ENCODE measurements at regions of chr9 and their contacts with region 1.

Region 1: DNA sequence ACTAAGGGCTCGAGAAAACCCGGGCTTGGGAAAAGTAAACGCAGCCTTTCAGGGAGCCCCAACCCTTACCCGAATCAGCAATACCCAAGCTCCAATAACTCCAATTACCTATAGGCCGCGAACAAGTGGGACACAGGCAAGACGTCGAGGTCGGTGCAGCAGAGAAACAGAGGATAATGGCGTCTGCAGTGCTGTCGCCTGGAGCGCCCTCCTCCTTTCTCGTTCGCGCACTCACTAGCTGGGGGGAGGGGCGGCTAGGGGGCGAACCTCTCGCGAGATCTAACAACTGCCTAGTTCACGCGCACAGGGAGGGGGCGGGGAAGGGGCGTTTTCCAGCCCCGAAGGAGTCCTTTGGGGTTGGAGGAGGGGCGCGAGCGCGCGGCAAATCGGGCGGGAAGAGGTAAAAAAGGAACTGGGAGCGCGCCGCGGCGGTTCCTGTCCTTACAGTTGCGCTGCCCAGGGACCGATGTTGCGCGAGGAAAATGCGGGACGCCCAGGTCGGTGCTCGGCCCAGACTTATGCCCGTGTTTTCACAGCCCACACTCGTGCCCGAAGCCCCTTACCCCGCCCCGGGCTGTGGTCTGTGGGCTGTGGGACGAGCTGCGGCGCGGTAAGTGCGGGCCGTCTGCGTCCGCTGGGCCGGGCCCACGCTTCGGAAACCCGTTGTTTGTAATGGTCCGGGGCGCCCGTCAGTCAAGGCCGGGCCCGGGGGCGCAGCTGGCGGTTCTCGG is at the start of gene RMI1:
- DNase-seq: peak; percentile 99 to 100 (median 99)
- ATAC-seq: peak; percentile 77
- H3K4me3 ChIP-seq: peak within 1 kb of the TSS; percentile 98 to 100
- H3K4me3 Mint-ChIP-seq: peak within 1 kb of the TSS; percentile 100
- H3K27ac ChIP-seq: peak within 1 kb of the TSS; percentile 96 to 100
- H3K27ac Mint-ChIP-seq: peak within 1 kb of the TSS; percentile 98
- H3K4me1 ChIP-seq: peaks cover 31% of the 10 kb centered on the region
- H3K4me1 Mint-ChIP-seq: peaks cover 42% of the 10 kb centered on the region
- H3K27me3 ChIP-seq: no peaks in the 10 kb centered on the region
- H3K27me3 Mint-ChIP-seq: no peaks in the 10 kb centered on the region
- CTCF ChIP-seq: no peak
- total RNA-seq, gene RMI1: 0.35 to 1.1 TPM

Region 2: DNA sequence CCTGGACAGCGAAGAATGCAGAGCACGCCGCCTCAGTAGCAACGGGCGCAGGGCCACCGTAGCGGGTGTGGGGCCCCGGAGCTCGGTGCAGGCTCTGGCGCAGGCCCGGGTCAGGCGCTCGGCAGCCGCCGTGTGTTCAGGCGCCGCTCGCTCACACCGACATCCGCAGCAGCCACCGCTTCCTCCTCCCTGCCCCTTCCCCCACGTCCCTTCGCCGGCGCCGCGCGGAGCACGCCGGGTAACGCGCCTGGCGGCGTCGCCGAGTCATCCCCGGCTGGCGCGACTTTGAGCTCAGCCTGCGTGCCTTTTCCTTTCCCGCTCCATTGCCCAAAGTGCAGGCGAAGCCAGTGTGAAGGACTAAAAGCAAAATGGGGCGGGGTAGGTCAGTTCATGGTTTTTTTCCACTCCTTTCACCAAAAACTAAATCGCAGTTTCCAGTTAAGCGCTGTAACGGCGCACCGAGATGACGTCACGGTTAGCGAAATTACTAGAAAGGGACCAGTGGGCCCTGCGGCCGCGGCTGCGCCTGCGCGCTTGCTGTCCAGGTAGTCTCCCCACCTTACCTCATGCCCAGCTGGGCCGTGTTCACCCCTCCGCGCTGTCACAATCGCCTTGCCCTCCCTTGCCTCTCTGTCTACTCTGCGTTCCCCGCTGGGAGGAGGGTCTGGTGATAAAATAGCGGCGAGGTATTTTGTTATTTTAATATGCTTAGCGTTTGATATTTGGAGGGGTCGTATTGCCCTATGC is 272.6 kb before region 1 on chr9 and contains the start of gene UBQLN1:
- CTCF ChIA-PET with region 1: no interaction called
- POLR2A ChIA-PET with region 1: interaction called, 19 read pairs
- intact Hi-C with region 1: loop called (anchors 1 to 2 kb)
- DNase-seq: peak; percentile 83 to 97 (median 91)
- ATAC-seq: peak; percentile 80
- H3K4me3 ChIP-seq: peak within 1 kb of the TSS; percentile 89 to 97
- H3K4me3 Mint-ChIP-seq: peak within 1 kb of the TSS; percentile 85
- H3K27ac ChIP-seq: peak within 1 kb of the TSS; percentile 98 to 99
- H3K27ac Mint-ChIP-seq: peak within 1 kb of the TSS; percentile 100
- H3K4me1 ChIP-seq: peaks cover 40% of the 10 kb centered on the region
- H3K4me1 Mint-ChIP-seq: peaks cover 43% of the 10 kb centered on the region
- H3K27me3 ChIP-seq: no peaks in the 10 kb centered on the region
- H3K27me3 Mint-ChIP-seq: no peaks in the 10 kb centered on the region
- CTCF ChIP-seq: no peak
- total RNA-seq, gene UBQLN1: 163 to 169 TPM

Region 3: DNA sequence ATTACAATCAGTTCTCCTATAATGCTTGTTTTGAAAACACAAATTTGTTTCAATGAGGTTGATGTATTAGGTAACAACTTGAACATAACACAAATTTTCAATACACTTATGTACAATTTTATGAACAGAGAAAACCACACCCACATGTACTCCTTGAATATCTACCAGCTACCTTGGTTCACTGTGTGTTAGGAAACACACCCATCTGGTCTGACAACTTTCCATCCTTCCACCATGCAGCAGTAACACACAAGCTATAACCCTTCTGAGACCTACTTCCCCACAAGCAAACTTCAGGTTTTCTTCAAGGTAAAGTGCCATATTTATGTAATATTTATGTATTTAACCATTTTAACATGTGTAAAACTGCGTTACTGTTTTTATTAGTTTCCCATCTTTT is 236.3 kb before region 1 on chr9:
- CTCF ChIA-PET with region 1: no interaction called
- POLR2A ChIA-PET with region 1: no interaction called
- intact Hi-C with region 1: no loop called
- DNase-seq: no peak
- ATAC-seq: no peak
- H3K4me3 ChIP-seq: no peak overlapping the region
- H3K4me3 Mint-ChIP-seq: no peak overlapping the region
- H3K27ac ChIP-seq: no peak overlapping the region
- H3K27ac Mint-ChIP-seq: no peak overlapping the region
- H3K4me1 ChIP-seq: no peaks in the 10 kb centered on the region
- H3K4me1 Mint-ChIP-seq: no peaks in the 10 kb centered on the region
- H3K27me3 ChIP-seq: no peaks in the 10 kb centered on the region
- H3K27me3 Mint-ChIP-seq: no peaks in the 10 kb centered on the region
- CTCF ChIP-seq: no peak

Region 4: DNA sequence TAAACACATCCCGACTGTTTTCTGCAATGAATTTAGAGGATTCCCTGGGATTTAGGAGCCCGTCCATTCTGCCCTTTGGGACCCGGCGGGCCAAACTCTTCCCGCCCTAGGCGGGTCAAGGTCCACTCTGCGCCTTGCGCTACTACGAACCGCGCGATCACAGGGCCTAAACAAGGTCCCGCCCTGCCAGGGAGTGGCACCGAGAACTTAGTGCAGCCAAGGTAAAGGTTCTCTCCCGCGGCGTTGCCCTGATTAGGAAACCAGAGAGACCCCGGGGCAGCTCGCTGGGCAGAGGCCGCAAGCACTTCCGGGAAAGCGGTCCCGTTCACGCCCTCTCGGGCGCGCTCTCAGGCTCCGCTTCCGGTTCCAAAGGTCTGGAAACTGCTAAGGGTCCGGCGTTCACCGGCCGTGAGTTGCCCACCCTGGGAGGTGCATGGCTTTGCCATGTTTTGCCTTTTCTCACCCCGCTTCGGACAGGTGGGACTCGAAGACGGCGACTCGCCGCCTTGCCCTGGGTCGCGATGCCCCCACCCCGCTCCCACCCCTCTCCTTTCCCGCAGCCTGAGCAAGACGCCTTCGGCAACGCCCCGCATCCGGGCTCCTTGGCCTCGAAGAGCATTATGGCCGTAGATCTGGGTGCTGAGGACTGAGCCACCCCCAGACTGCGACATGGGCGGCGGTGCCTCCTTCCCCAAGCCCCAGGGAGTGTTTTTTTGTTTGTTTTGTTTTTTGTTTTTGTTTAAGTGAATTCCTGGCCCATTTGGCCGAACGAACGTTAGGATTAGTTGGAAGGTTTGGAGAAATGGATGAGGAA is 23.9 kb before region 1 on chr9:
- CTCF ChIA-PET with region 1: interaction called, 6 read pairs
- POLR2A ChIA-PET with region 1: interaction called, 19 read pairs
- intact Hi-C with region 1: loop called (anchors 1 to 2 kb)
- DNase-seq: peak in 8 of 9 experiments; percentile 38 to 79 (median 63)
- ATAC-seq: peak; percentile 78
- H3K4me3 ChIP-seq: peak overlapping the region; percentile 87 to 90
- H3K4me3 Mint-ChIP-seq: peak overlapping the region; percentile 95
- H3K27ac ChIP-seq: peak overlapping the region; percentile 64 to 80
- H3K27ac Mint-ChIP-seq: peak overlapping the region; percentile 86
- H3K4me1 ChIP-seq: peaks cover 8% of the 10 kb centered on the region
- H3K4me1 Mint-ChIP-seq: peaks cover 21% of the 10 kb centered on the region
- H3K27me3 ChIP-seq: no peaks in the 10 kb centered on the region
- H3K27me3 Mint-ChIP-seq: no peaks in the 10 kb centered on the region
- CTCF ChIP-seq: no peak

Region 5: DNA sequence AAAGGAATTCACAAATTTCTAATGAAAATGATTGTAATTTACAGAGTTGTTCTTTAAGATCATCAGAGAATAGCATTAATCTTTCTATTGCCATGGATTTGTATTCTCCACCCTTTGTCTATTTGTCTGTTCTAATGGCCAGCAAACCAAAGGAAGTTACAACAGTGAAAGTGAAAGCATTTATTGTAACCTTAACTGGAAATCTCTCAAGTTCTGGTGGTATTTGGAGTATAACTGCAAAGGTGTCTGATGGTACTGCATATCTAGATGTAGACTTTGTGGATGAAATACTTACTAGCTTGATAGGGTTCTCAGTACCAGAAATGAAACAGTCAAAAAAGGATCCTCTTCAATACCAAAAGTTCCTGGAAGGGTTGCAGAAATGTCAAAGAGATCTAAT is 21.8 kb after region 1 on chr9:
- CTCF ChIA-PET with region 1: no interaction called
- POLR2A ChIA-PET with region 1: interaction called, 11 read pairs
- intact Hi-C with region 1: no loop called
- DNase-seq: peak in 1 of 9 experiments; percentile 41
- ATAC-seq: no peak
- H3K4me3 ChIP-seq: no peak overlapping the region
- H3K4me3 Mint-ChIP-seq: no peak overlapping the region
- H3K27ac ChIP-seq: peak overlapping the region in 1 of 2 experiments; percentile 11
- H3K27ac Mint-ChIP-seq: peak overlapping the region; percentile 27
- H3K4me1 ChIP-seq: no peaks in the 10 kb centered on the region
- H3K4me1 Mint-ChIP-seq: peaks cover 13% of the 10 kb centered on the region
- H3K27me3 ChIP-seq: no peaks in the 10 kb centered on the region
- H3K27me3 Mint-ChIP-seq: no peaks in the 10 kb centered on the region
- CTCF ChIP-seq: no peak

Region 6: DNA sequence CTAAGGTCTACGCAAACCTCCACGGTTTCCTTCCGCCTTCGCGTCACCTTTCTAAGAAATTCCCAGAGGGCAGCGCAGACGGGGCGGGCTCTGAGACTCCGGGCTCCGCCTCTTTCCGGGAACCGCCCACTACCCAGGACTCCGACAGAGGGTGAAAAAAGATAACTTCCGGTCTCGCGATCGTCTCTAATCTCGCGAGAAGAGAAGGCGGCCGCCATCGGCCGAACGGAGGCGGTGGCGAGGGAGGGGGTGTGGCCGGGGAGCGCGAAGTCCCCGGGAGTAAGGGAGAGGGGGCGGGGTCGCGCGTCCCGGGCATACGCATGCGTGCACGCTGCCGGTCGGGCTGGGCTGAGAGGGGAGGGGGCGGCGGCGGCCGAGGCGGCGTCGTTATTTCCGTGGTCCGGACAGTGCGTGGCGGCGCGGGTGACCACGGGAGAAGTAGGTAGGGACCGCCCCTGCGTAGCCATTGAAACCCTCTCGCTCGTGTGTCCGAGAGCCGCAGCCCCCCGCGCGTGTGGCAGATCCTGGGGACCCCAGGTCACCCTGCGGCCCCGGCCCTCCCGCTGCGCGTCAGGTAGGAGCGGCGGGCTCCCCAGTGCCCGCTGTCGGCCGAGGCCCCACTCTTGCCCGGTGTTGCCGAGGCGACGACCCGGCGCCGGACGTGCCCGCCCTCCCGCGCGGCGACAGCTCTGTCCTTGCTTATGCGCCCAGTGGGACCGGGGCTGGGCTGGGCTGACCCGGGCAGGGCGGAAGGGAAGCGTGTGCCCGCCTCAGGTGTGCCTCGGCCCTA is 1960.5 kb after region 1 on chr9 and contains the start of gene NAA35:
- CTCF ChIA-PET with region 1: no interaction called
- POLR2A ChIA-PET with region 1: no interaction called
- intact Hi-C with region 1: loop called (anchors 5 kb)
- DNase-seq: peak; percentile 98 to 99 (median 99)
- ATAC-seq: peak; percentile 87
- H3K4me3 ChIP-seq: peak within 1 kb of the TSS; percentile 62 to 76
- H3K4me3 Mint-ChIP-seq: peak within 1 kb of the TSS; percentile 89
- H3K27ac ChIP-seq: peak within 1 kb of the TSS; percentile 78 to 83
- H3K27ac Mint-ChIP-seq: peak within 1 kb of the TSS; percentile 91
- H3K4me1 ChIP-seq: peaks cover 34% of the 10 kb centered on the region
- H3K4me1 Mint-ChIP-seq: peaks cover 12% of the 10 kb centered on the region
- H3K27me3 ChIP-seq: no peaks in the 10 kb centered on the region
- H3K27me3 Mint-ChIP-seq: no peaks in the 10 kb centered on the region
- CTCF ChIP-seq: no peak
- total RNA-seq, gene NAA35: 19.8 to 24.0 TPM